ENCODE measurements at regions of chr13 and their contacts with region 1.

Region 1: GRCh38 chr13:24995226-24995804 is 100.6 kb upstream of the PABPC3 start:
- DNase-seq: peak in 4 of 10 donors; percentile 48 to 79 (median 64)
- H3K4me3 ChIP-seq: peak overlapping the region in 2 of 59 donors; percentile 5 to 10
- H3K27ac ChIP-seq: peak overlapping the region in 1 of 59 donors; percentile 7
- H3K27me3 ChIP-seq: peaks cover 0 to 3% (median 0%) of the 10 kb centered on the region in 45 donors
- CTCF ChIP-seq: peak; percentile 61 to 90 (median 80)

Region 2: DNA sequence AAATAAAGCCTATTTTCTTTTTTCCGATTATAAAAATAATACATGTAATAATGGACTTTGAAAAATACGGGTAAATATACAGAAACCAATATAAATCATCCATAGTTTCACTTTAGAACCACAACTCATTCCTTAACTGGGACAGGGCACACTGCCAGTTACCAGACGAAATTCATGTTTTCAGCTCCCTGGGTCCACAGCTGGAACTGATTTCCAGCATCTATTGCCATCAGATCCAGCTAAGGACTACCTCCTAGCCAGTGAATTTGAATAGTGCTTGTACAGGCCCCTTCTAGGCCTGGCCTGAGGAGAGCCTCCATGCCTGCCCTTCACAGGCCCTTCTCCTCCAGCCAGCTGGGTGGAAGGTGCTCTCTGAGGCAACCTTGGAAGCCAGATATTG is 345.2 kb before region 1 on chr13:
- intact Hi-C with region 1: no loop called
- DNase-seq: no peak
- H3K4me3 ChIP-seq: no peak overlapping the region
- H3K27ac ChIP-seq: no peak overlapping the region
- H3K27me3 ChIP-seq: peaks cover 0 to 10% (median 0%) of the 10 kb centered on the region in 45 donors
- CTCF ChIP-seq: no peak

Region 3: DNA sequence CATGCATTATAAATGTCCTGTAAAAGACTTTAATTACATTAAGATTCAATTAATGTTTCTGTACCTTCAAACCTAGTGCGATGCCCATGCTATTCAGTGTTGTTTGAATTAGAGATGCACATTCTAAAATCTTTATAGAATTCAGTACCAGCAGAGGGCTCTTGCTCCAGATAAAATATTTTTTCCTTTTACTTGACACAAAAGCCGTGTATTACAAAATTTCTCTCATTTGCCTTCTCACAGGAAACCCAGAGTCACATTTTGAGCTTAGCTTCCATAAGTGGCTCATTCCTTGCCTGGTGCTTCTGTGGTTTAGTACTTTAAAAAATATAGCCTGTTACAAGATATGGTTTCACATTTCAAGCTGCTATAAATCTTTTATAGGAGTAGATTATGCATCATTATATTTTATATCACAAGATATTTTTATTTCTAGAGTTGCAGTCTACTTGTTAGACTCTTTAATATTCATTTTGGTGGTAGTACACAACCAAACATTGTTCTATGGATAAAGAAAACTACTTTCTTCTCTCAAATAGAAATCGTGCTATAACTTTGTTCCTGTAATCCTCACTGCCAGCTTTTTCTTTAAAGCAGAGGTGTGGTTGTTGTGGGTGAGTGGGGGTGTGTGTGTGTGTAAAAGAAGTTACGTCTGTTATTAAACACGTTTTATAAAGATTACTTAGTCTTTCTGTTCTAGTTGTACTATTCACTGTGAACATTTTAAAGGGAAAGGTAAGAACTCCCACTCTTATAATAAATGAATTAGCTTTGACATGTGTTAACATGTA is 130.0 kb before region 1 on chr13:
- intact Hi-C with region 1: loop called in 1 of 2 experiments (anchors 10 kb)
- DNase-seq: no peak
- H3K4me3 ChIP-seq: peak overlapping the region in 2 of 59 donors; percentile 2 to 6
- H3K27ac ChIP-seq: no peak overlapping the region
- H3K27me3 ChIP-seq: peaks cover 0 to 6% (median 0%) of the 10 kb centered on the region in 45 donors
- CTCF ChIP-seq: peak in 52 of 56 donors; percentile 12 to 70 (median 42)

Region 4: GRCh38 chr13:24893863-24894262 is 101.5 kb before region 1 on chr13:
- intact Hi-C with region 1: no loop called
- DNase-seq: no peak
- H3K4me3 ChIP-seq: no peak overlapping the region
- H3K27ac ChIP-seq: no peak overlapping the region
- H3K27me3 ChIP-seq: no peaks in the 10 kb centered on the region
- CTCF ChIP-seq: no peak

Region 5: GRCh38 chr13:25037057-25037813 is 41.9 kb after region 1 on chr13:
- intact Hi-C with region 1: loop called in 1 of 2 experiments (anchors 2 kb)
- DNase-seq: peak in 8 of 10 donors; percentile 50 to 70 (median 62)
- H3K4me3 ChIP-seq: no peak overlapping the region
- H3K27ac ChIP-seq: peak overlapping the region in 2 of 59 donors; percentile 21 to 27
- H3K27me3 ChIP-seq: peaks cover 0 to 14% (median 0%) of the 10 kb centered on the region in 45 donors
- CTCF ChIP-seq: peak; percentile 69 to 95 (median 86)